Left colon (tissue), 2 donors: ENCODE measurements at regions of chr22 and their contacts with region 1.

Region 1: DNA sequence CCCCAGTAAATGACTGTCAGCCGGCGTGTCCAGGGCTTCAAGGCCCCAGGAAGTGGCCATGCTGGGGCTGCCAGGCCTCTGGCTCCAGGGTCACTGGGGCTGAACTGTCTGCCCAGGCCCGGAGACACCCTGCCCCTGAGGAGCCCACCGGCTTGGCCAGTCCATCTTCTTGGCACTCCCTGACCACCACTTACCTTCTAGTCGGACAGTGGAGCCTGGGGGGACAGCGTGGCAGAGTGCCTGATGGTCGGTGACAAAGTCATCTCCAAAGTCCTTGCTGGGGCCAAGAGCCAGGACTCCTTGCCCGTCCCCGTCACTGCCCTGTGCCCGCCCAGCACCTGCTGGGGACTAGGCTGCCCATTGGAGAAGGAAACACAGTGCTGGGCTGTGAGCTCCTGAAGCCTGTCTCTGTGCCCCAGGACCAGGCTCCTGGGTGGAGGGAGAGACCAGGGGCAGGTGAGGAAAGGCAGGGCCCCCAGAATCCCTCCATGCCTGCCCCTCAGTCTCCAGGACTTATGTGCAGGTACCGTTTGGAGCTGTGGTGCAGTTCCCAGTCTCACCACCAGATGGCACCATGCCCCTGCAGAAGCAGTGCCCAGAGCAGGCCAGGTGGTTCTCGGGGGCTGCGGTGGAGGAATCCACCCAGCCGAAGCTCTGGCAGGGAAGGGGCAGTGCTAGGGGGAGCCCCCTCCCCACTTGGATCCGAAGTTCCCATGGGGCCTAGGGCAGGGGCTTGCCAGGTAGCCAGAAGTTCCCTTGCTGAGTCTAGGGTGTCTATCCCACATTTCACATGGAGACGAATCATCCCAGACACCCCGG is 6.0 kb upstream of the CCDC188 start:
- DNase-seq: peak; percentile 51 to 90
- ATAC-seq: peak; percentile 66

Region 2: GRCh38 chr22:20268279-20269012 is 111.6 kb after region 1 on chr22 and contains the start of gene RTN4R:
- intact Hi-C with region 1: loop called in 1 of 2 experiments (anchors 5 kb)
- DNase-seq: peak in 1 of 2 donors; percentile 78
- ATAC-seq: peak; percentile 89
- total RNA-seq, gene RTN4R: 4.0 to 6.5 TPM

Region 3: DNA sequence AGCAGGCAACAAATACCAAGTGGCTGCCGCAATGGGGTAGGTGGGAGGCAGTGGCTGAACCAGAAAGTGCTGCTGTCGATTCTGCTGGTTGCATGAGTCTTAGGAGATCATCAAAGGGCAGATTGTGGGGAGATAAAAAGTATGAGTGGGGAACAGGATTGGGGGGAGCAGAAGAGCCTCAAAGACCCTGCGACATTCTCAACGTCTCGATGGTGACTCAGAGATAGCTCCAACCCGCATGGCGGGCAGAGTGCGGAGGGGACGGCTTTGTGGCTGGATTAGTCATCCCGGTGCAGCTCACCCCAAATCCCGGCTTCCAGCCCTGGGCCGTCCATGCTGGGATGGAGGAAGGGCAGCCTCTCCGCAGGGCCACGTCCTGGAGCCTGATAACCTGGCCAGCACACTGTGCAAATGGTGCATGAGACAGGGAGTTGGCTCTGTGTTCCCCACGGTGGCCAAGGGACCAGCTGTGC is 122.9 kb after region 1 on chr22:
- intact Hi-C with region 1: loop called in 1 of 2 experiments (anchors 5 kb)
- DNase-seq: no peak
- ATAC-seq: no peak